IMR-90 (cell line): ENCODE measurements at regions of chr7 and their contacts with region 1.

Region 1: DNA sequence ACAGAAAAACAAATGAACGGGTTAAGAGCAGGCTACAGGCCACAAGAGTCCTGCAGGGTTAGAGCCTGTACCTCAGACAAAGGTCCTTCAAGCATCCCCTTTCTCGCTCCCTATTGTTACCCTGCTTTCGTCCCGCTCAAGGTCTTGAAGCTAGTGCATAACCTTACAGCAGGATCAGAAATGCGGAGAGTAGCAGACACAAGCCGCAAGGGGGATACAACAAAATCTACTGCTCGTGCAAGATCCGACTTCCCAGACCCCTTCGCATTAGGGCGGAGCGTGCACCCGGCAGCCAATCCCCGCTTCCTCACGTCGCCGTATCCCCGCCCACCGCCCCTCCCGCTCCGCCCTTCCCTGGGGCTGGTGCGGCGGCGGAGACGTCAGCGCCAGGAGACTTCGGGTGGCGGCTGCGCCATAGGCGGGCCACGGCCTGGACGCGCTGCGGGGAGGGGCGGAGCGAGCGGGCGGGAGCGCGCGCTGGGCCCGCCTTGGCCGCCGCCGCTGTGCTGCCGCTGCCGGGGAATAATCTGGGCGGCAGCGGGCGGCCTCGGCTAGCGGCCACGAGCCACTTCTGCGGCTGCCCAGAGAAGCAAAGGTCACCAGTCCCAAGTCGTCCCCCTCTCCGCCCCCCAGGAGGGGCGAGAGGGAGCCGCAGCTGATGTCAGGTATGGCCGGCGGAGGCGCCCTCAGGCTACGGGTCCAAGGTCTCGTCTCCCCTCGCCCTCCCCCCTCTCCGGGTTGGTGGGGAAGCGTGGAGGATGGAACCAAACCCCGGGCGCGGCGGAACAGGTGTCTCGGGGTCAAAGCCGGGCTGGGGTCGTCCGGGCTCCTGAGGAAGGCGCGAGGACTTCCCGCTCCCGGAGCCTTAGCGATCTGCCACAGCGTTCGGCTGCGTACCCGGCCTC is at the start of gene C1GALT1:
- DNase-seq: peak; percentile 97
- ATAC-seq: peak; percentile 97
- H3K4me3 ChIP-seq: peak within 1 kb of the TSS; percentile 77
- H3K27ac ChIP-seq: peak within 1 kb of the TSS; percentile 72
- H3K4me1 ChIP-seq: peaks cover 3% of the 10 kb centered on the region; the same call in 1 of the 2 replicates
- H3K27me3 ChIP-seq: no peaks in the 10 kb centered on the region
- CTCF ChIP-seq: peak; percentile 56
- POLR2A ChIP-seq: peak; percentile 77
- RAD21 ChIP-seq: peak; percentile 43
- total RNA-seq, gene C1GALT1: 12.2 and 23.1 TPM in 2 replicates

Region 2: GRCh38 chr7:7112868-7113267 is 69.5 kb before region 1 on chr7:
- CTCF ChIA-PET with region 1: no interaction called
- POLR2A ChIA-PET with region 1: no interaction called
- dilution Hi-C with region 1: no loop called
- in situ Hi-C with region 1: no loop called
- intact Hi-C with region 1: no loop called
- DNase-seq: no peak
- ATAC-seq: no peak
- H3K4me3 ChIP-seq: no peak overlapping the region
- H3K27ac ChIP-seq: no peak overlapping the region
- H3K4me1 ChIP-seq: no peaks in the 10 kb centered on the region
- H3K27me3 ChIP-seq: peaks cover 1% of the 10 kb centered on the region; the same call in 1 of the 2 replicates
- CTCF ChIP-seq: no peak
- POLR2A ChIP-seq: no peak
- RAD21 ChIP-seq: no peak

Region 3: DNA sequence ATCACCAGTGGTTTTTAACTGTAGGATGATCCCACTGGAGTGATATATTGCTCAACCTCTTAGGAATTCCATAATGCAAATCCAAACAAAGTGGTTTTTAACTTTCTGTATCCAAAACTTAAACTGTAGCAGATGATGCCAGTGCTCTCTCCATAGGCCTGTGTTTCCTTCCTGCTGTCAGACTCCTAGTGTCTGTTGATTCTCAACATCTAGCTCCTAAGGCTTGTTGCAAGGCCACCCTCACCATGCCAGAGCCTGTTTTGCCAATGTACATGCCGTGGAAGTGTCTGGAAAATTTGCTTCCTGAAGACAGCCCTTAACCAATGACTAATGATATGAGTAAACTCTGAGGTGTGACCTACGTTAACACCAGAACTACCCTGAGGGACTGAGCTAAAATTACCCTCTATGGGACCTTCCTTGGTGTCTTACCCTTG is 39.2 kb after region 1 on chr7:
- CTCF ChIA-PET with region 1: interaction called, 3 read pairs
- POLR2A ChIA-PET with region 1: no interaction called
- dilution Hi-C with region 1: no loop called
- in situ Hi-C with region 1: no loop called
- intact Hi-C with region 1: loop called (anchors 2 kb)
- DNase-seq: peak; percentile 75
- ATAC-seq: peak; percentile 93
- H3K4me3 ChIP-seq: no peak overlapping the region
- H3K27ac ChIP-seq: peak overlapping the region; percentile 9; the same call in 1 of the 2 replicates
- H3K4me1 ChIP-seq: peaks cover 6% of the 10 kb centered on the region
- H3K27me3 ChIP-seq: no peaks in the 10 kb centered on the region
- CTCF ChIP-seq: no peak
- POLR2A ChIP-seq: no peak
- RAD21 ChIP-seq: no peak

Region 4: GRCh38 chr7:7237201-7237977 is 55.0 kb after region 1 on chr7:
- CTCF ChIA-PET with region 1: no interaction called
- POLR2A ChIA-PET with region 1: interaction called, 4 read pairs
- dilution Hi-C with region 1: no loop called
- in situ Hi-C with region 1: no loop called
- intact Hi-C with region 1: loop called (anchors 5 kb)
- DNase-seq: no peak
- ATAC-seq: no peak
- H3K4me3 ChIP-seq: no peak overlapping the region
- H3K27ac ChIP-seq: no peak overlapping the region
- H3K4me1 ChIP-seq: no peaks in the 10 kb centered on the region
- H3K27me3 ChIP-seq: no peaks in the 10 kb centered on the region
- CTCF ChIP-seq: no peak
- POLR2A ChIP-seq: no peak
- RAD21 ChIP-seq: no peak

Region 5: GRCh38 chr7:7542251-7542835 is 359.9 kb after region 1 on chr7:
- CTCF ChIA-PET with region 1: no interaction called
- POLR2A ChIA-PET with region 1: no interaction called
- dilution Hi-C with region 1: no loop called
- in situ Hi-C with region 1: no loop called
- intact Hi-C with region 1: loop called (anchors 5 kb)
- DNase-seq: no peak
- ATAC-seq: no peak
- H3K4me3 ChIP-seq: no peak overlapping the region
- H3K27ac ChIP-seq: no peak overlapping the region
- H3K4me1 ChIP-seq: no peaks in the 10 kb centered on the region
- H3K27me3 ChIP-seq: no peaks in the 10 kb centered on the region
- CTCF ChIP-seq: no peak
- POLR2A ChIP-seq: no peak
- RAD21 ChIP-seq: no peak